Endothelial cell of umbilical vein (primary cell): ENCODE measurements at regions of chr19 and their contacts with region 1.

Region 1: GRCh38 chr19:14571695-14572490 is at the start of gene NDUFB7:
- DNase-seq: peak; percentile 94
- H3K4me3 ChIP-seq: peak within 1 kb of the TSS; percentile 48 to 96 (median 70)
- H3K27ac ChIP-seq: peak within 1 kb of the TSS; percentile 6
- H3K4me1 ChIP-seq: peaks cover 8% of the 10 kb centered on the region
- H3K27me3 ChIP-seq: no peaks in the 10 kb centered on the region
- CTCF ChIP-seq: peak; percentile 71 to 73
- POLR2A ChIP-seq: peak; percentile 62
- total RNA-seq, gene NDUFB7: 170 and 177 TPM in 2 replicates

Region 2: GRCh38 chr19:14369399-14370168 is 202.3 kb before region 1 on chr19:
- CTCF ChIA-PET with region 1: no interaction called
- POLR2A ChIA-PET with region 1: no interaction called
- dilution Hi-C with region 1: no loop called
- intact Hi-C with region 1: no loop called
- DNase-seq: no peak
- H3K4me3 ChIP-seq: no peak overlapping the region
- H3K27ac ChIP-seq: no peak overlapping the region
- H3K4me1 ChIP-seq: no peaks in the 10 kb centered on the region
- H3K27me3 ChIP-seq: no peaks in the 10 kb centered on the region
- CTCF ChIP-seq: no peak
- POLR2A ChIP-seq: no peak

Region 3: DNA sequence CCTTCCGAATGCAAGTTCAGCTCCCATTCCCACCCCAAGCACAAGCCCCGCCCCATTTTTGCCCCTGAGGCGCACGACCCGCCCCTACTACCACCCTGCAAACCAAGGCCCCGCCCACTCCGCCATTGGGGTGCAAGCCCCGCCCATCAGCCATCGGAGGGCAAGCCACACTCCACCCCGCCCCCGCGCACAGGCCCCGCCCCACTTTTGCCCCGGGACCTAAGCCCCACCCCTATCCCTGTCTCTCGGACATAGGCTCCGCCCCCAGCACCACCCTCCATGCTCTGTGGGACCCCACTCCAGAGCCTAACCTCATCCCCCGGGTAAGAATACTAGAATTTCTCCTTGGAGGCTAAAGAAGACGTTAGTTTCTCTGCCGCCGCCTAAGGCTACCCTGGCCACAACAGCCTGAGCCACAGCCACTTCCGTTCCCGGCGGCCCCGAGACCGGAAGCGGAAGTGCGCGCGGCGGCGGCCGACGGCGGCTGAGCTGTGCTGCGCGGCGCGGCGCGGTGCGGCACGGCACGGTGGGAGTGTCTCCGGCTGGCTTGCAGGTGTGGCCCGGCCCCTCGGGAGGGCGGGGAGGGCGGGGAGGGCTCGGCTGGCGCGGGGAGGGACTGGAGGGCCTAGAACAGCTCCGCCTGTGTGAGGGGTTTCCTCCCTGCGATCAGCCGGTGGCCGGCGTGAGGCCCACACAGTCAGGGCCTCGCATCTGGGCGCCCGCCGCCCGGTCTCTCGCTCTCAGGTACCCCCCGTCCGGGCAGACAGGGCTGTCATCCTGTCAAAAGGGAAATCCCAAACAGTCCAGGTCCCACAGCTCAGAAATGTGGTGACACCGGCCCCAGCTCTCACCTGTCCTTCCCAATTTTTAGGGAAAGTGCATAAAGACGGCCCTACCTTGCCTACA is 118.0 kb after region 1 on chr19 and contains the start of gene ZNF333:
- CTCF ChIA-PET with region 1: interaction called, 342 read pairs
- POLR2A ChIA-PET with region 1: interaction called, 5 read pairs
- dilution Hi-C with region 1: no loop called
- intact Hi-C with region 1: loop called (anchors 1 kb)
- DNase-seq: peak; percentile 88
- H3K4me3 ChIP-seq: peak within 1 kb of the TSS; percentile 98 to 99 (median 99)
- H3K27ac ChIP-seq: peak within 1 kb of the TSS; percentile 95
- H3K4me1 ChIP-seq: peaks cover 9% of the 10 kb centered on the region
- H3K27me3 ChIP-seq: peaks cover 0 to 2% of the 10 kb centered on the region in 2 experiments
- CTCF ChIP-seq: no peak
- POLR2A ChIP-seq: peak; percentile 74
- total RNA-seq, gene ZNF333: 17.1 and 19.7 TPM in 2 replicates

Region 4: GRCh38 chr19:14890643-14891379 is 318.9 kb after region 1 on chr19:
- CTCF ChIA-PET with region 1: interaction called, 12 read pairs
- POLR2A ChIA-PET with region 1: no interaction called
- dilution Hi-C with region 1: no loop called
- intact Hi-C with region 1: loop called (anchors 1 kb)
- DNase-seq: no peak
- H3K4me3 ChIP-seq: no peak overlapping the region
- H3K27ac ChIP-seq: no peak overlapping the region
- H3K4me1 ChIP-seq: no peaks in the 10 kb centered on the region
- H3K27me3 ChIP-seq: peaks cover 0 to 3% of the 10 kb centered on the region in 2 experiments
- CTCF ChIP-seq: no peak
- POLR2A ChIP-seq: no peak